CD8-positive, alpha-beta T cell (primary cell): ENCODE measurements at regions of chr1 and their contacts with region 1.

Region 1: GRCh38 chr1:150464422-150464826 is 22.8 kb upstream of the TARS2 start:
- DNase-seq: peak; percentile 46 to 82 (median 73)
- ATAC-seq: peak; percentile 96
- H3K4me3 ChIP-seq: no peak overlapping the region
- H3K4me3 Mint-ChIP-seq: no peak overlapping the region
- H3K27ac ChIP-seq: no peak overlapping the region
- H3K27ac Mint-ChIP-seq: peak overlapping the region; percentile 33
- H3K4me1 ChIP-seq: no peaks in the 10 kb centered on the region
- H3K4me1 Mint-ChIP-seq: peaks cover 4% of the 10 kb centered on the region
- H3K27me3 ChIP-seq: no peaks in the 10 kb centered on the region
- H3K27me3 Mint-ChIP-seq: no peaks in the 10 kb centered on the region
- CTCF ChIP-seq: peak; percentile 78

Region 2: GRCh38 chr1:150486964-150487762 is 22.7 kb after region 1 on chr1 and contains the start of gene TARS2:
- CTCF ChIA-PET with region 1: interaction called, 3 read pairs
- POLR2A ChIA-PET with region 1: no interaction called
- intact Hi-C with region 1: loop called in 1 of 2 experiments (anchors 1 kb)
- DNase-seq: peak; percentile 87 to 97 (median 94)
- ATAC-seq: peak; percentile 100
- H3K4me3 ChIP-seq: peak within 1 kb of the TSS; percentile 86 to 97
- H3K4me3 Mint-ChIP-seq: peak within 1 kb of the TSS; percentile 100
- H3K27ac ChIP-seq: peak within 1 kb of the TSS; percentile 81
- H3K27ac Mint-ChIP-seq: peak within 1 kb of the TSS; percentile 99
- H3K4me1 ChIP-seq: peaks cover 9% of the 10 kb centered on the region
- H3K4me1 Mint-ChIP-seq: peaks cover 18% of the 10 kb centered on the region
- H3K27me3 ChIP-seq: no peaks in the 10 kb centered on the region
- H3K27me3 Mint-ChIP-seq: no peaks in the 10 kb centered on the region
- CTCF ChIP-seq: no peak
- total RNA-seq, gene TARS2: 19.4 to 28.8 TPM

Region 3: DNA sequence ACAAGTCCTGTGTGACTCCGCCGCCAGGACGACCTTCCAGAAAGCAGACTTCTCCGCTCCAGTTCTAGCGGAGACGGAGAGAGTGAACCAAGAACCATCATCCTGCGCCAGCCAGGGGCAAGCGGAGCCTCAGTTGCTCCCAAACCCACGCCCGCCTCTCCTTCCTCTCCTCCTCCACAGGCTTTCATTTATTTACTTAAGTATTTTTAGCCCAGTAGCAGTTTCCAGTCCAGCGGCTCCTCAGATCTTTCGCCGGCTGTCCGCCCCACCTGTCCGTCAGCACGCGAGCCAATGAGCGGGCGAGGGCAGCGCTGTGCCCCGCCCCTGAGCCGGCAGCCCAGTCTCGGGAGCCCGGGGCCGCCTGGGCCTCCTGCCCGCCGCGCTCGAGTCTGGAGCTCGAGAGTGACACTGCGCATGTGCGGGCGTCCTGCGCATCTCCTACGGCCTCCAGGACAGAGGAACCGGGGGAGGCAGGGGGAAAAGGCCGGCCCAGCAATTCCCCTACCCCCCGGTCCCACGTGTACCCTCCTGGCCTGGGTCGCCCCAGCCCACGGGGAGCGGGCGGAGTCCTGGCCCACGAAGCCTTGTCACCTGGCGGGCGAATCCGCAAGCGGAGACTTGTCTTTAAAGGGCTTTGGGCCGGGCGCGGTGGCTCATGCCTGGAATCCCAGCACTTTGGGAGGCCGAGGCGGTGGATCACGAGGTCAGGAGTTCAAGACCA is 51.1 kb after region 1 on chr1 and contains the start of gene FALEC:
- CTCF ChIA-PET with region 1: no interaction called
- POLR2A ChIA-PET with region 1: no interaction called
- intact Hi-C with region 1: loop called in 1 of 2 experiments (anchors 1 kb)
- DNase-seq: peak; percentile 76 to 95 (median 89)
- ATAC-seq: peak; percentile 98
- H3K4me3 ChIP-seq: peak within 1 kb of the TSS; percentile 68 to 89
- H3K4me3 Mint-ChIP-seq: peak within 1 kb of the TSS; percentile 89
- H3K27ac ChIP-seq: peak within 1 kb of the TSS; percentile 13 to 63
- H3K27ac Mint-ChIP-seq: peak within 1 kb of the TSS; percentile 79
- H3K4me1 ChIP-seq: peaks cover 3% of the 10 kb centered on the region
- H3K4me1 Mint-ChIP-seq: peaks cover 16% of the 10 kb centered on the region
- H3K27me3 ChIP-seq: no peaks in the 10 kb centered on the region
- H3K27me3 Mint-ChIP-seq: no peaks in the 10 kb centered on the region
- CTCF ChIP-seq: no peak
- total RNA-seq, gene FALEC: not detected

Region 4: DNA sequence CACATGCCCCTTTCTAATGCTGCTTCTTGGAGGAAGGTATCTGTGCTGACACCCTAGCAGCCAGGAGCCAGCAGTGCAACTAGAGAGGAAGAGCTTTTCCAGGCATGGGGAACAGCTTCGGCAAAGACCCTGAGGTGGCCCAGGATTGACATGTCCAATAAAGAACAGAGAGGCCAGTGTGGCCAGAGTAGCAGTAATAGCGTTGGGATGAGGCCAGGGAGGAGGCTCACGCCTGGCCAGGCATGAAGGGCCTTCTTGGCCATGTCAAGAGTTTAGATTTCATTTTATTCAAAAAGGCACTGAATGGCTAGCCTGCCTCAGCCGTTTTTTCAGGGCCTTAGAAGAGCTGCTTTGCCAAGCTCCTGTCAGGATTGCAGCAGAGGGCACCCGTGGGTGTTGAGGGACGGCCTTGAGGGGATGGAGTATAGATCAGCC is 68.5 kb after region 1 on chr1:
- CTCF ChIA-PET with region 1: interaction called, 14 read pairs
- POLR2A ChIA-PET with region 1: no interaction called
- intact Hi-C with region 1: loop called in 1 of 2 experiments (anchors 1 kb)
- DNase-seq: no peak
- ATAC-seq: no peak
- H3K4me3 ChIP-seq: no peak overlapping the region
- H3K4me3 Mint-ChIP-seq: no peak overlapping the region
- H3K27ac ChIP-seq: no peak overlapping the region
- H3K27ac Mint-ChIP-seq: no peak overlapping the region
- H3K4me1 ChIP-seq: no peaks in the 10 kb centered on the region
- H3K4me1 Mint-ChIP-seq: peaks cover 3% of the 10 kb centered on the region
- H3K27me3 ChIP-seq: no peaks in the 10 kb centered on the region
- H3K27me3 Mint-ChIP-seq: peaks cover 3% of the 10 kb centered on the region
- CTCF ChIP-seq: no peak

Region 5: DNA sequence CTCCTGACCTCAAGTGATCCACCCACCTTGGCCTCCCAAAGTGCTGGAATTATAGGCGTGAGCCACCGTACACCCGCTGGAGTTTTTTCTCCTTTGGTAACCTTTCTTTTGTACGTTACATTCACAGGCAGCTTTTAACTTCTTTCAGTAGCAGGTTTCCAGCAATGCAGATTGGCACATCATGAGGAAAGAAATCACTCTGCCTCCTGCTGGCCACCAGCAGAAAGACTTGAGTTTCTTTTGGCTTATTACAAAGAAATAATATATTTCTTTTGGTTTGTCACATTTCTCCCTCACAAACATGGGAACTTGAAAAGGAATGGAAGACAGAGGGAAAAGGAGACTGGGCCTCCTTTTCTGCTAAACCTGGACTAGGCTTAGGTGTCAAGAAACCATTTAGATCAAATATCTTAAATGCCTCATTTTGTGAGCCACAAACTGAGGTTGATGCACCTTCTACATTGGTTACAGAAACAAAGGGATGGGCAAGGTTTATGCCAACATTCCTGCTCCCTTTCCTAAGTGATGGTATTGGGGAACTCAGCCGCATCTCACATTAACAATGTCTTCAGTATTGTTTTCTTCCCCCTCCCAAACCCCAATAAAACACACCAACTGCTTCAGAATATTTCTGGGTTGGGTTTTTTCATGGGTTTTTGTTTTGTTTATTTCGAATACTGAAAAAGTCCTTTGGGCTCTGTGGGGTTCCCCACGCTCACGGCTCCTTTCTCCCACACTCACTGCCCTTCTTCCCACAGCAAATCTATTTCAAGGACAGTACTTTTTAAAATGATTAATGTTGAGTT is 157.3 kb after region 1 on chr1:
- CTCF ChIA-PET with region 1: interaction called, 4 read pairs
- POLR2A ChIA-PET with region 1: interaction called, 3 read pairs
- intact Hi-C with region 1: loop called (anchors 1 to 2 kb)
- DNase-seq: peak in 8 of 9 experiments; percentile 23 to 84 (median 68)
- ATAC-seq: peak; percentile 80
- H3K4me3 ChIP-seq: no peak overlapping the region
- H3K4me3 Mint-ChIP-seq: no peak overlapping the region
- H3K27ac ChIP-seq: peak overlapping the region in 1 of 2 experiments; percentile 62
- H3K27ac Mint-ChIP-seq: peak overlapping the region; percentile 80
- H3K4me1 ChIP-seq: peaks cover 19% of the 10 kb centered on the region
- H3K4me1 Mint-ChIP-seq: peaks cover 34% of the 10 kb centered on the region
- H3K27me3 ChIP-seq: no peaks in the 10 kb centered on the region
- H3K27me3 Mint-ChIP-seq: no peaks in the 10 kb centered on the region
- CTCF ChIP-seq: peak; percentile 74

Region 6: GRCh38 chr1:150995896-150996295 is 531.5 kb after region 1 on chr1:
- CTCF ChIA-PET with region 1: no interaction called
- POLR2A ChIA-PET with region 1: no interaction called
- intact Hi-C with region 1: loop called (anchors 1 to 2 kb)
- DNase-seq: peak in 4 of 9 experiments; percentile 29 to 65 (median 44)
- ATAC-seq: peak; percentile 64
- H3K4me3 ChIP-seq: no peak overlapping the region
- H3K4me3 Mint-ChIP-seq: no peak overlapping the region
- H3K27ac ChIP-seq: no peak overlapping the region
- H3K27ac Mint-ChIP-seq: no peak overlapping the region
- H3K4me1 ChIP-seq: no peaks in the 10 kb centered on the region
- H3K4me1 Mint-ChIP-seq: peaks cover 8% of the 10 kb centered on the region
- H3K27me3 ChIP-seq: no peaks in the 10 kb centered on the region
- H3K27me3 Mint-ChIP-seq: no peaks in the 10 kb centered on the region
- CTCF ChIP-seq: peak; percentile 95